Activated CD8-positive, alpha-beta T cell treated with anti-CD3 and anti-CD28 coated beads, Interleukin-2, amount 10 ng/mL, durations not matched to agents 7 days and 5 days (primary cell): ENCODE measurements at regions of chr22 and their contacts with region 1.

Region 1: DNA sequence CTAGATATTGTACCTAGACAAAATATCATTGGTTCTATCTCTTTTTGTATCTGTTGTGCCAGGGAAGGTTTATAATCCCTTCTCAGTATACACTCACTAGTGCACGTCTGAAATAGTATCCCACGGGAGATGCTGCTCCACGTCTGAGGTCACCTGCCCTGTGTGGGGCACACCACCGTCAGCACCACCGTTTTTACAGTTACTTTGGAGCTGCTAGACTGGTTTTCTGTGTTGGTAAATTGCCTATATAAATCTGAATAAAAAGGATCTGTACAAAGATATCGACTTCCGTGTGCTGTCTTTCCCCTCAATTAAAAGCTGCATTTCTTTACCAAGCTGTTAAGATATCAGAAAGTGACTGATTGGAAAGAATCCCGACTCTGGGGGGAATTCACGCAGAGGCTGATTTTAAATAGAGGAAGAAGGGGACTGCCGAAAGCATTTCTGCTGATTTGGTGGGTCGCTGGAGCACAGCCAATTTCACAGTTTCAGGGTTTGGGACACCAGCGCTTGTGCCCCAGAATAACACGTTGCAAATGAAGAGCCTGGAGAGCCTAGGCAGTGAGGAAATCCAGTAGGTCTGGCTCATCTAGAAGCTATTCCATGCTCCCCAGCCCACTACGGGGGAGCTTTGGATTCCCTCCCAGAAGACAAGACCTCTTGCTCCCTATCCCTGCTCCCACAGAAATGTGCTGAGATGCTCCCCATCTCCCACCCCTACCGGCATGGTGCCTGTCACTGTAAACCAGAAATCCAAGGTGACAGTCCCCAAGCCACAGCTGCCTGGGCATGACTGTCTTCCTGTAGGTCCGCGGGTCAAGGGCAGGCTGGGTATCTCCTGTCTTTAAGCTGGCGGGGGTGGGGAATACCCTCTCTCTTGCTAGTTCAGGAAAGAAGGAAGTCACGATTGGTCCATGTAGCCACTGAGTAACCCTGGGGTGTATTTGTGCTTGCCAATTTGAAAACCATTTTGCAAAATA is 12.7 kb upstream of the MYO18B start:
- DNase-seq: no peak
- ATAC-seq: no peak
- H3K4me3 Mint-ChIP-seq: no peak overlapping the region
- H3K27ac Mint-ChIP-seq: peak overlapping the region; percentile 46
- H3K4me1 Mint-ChIP-seq: peaks cover 28% of the 10 kb centered on the region
- H3K27me3 Mint-ChIP-seq: no peaks in the 10 kb centered on the region

Region 2: GRCh38 chr22:25709758-25710157 is 19.5 kb before region 1 on chr22:
- CTCF ChIA-PET with region 1: interaction called, 12 read pairs
- POLR2A ChIA-PET with region 1: interaction called, 4 read pairs
- DNase-seq: peak; percentile 62
- ATAC-seq: peak; percentile 80
- H3K4me3 Mint-ChIP-seq: no peak overlapping the region
- H3K27ac Mint-ChIP-seq: peak overlapping the region; percentile 80
- H3K4me1 Mint-ChIP-seq: peaks cover 38% of the 10 kb centered on the region
- H3K27me3 Mint-ChIP-seq: no peaks in the 10 kb centered on the region